IMR-90 (cell line): ENCODE measurements at regions of chr17 and their contacts with region 1.

Region 1: GRCh38 chr17:63052639-63053038 is 86.6 kb downstream of the TANC2 start:
- DNase-seq: no peak
- ATAC-seq: no peak
- H3K4me3 ChIP-seq: no peak overlapping the region
- H3K27ac ChIP-seq: no peak overlapping the region
- H3K4me1 ChIP-seq: no peaks in the 10 kb centered on the region
- H3K27me3 ChIP-seq: no peaks in the 10 kb centered on the region
- CTCF ChIP-seq: no peak
- POLR2A ChIP-seq: no peak
- RAD21 ChIP-seq: no peak

Region 2: DNA sequence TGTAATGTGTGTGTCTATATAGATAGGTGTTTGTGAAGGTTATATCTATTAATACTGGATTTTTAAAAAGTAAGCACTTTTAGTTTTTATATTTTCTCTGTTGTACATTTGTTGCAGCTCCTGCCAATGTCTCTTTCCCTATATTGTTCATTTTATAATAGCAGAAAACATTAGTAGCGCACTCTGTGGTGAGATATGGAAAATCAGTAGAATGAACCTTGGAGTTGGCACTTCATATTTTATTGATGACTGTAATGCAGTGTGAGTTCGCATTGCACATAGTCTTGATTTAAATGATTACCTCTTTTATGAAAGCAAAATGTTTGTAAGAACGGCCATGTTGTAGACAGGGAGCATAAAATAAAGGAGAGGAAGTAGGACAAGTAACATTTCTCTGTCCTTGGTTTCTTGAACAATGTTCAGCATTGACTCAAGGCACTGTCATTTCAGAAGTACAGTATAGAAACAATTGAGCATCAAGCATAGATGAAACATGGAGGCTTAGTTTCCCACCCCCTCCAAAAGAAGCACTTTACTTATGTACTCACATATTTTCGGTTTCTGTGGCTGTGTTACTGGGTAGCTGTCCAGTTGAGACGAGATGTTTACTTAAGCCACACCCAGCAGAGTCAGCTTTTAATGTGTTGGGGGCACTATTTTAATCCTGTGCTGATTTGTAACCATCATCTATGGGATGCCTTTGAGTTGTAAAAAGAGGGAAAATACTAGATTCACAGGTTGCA is 12.6 kb before region 1 on chr17:
- CTCF ChIA-PET with region 1: no interaction called
- POLR2A ChIA-PET with region 1: no interaction called
- dilution Hi-C with region 1: no loop called
- in situ Hi-C with region 1: no loop called
- intact Hi-C with region 1: loop called (anchors 1 kb)
- DNase-seq: peak; percentile 56
- ATAC-seq: peak; percentile 64
- H3K4me3 ChIP-seq: no peak overlapping the region
- H3K27ac ChIP-seq: no peak overlapping the region
- H3K4me1 ChIP-seq: peaks cover 6% of the 10 kb centered on the region
- H3K27me3 ChIP-seq: no peaks in the 10 kb centered on the region
- CTCF ChIP-seq: no peak
- POLR2A ChIP-seq: no peak
- RAD21 ChIP-seq: no peak